Mammary epithelial cell (primary cell): ENCODE measurements at regions of chr16 and their contacts with region 1.

Region 1: DNA sequence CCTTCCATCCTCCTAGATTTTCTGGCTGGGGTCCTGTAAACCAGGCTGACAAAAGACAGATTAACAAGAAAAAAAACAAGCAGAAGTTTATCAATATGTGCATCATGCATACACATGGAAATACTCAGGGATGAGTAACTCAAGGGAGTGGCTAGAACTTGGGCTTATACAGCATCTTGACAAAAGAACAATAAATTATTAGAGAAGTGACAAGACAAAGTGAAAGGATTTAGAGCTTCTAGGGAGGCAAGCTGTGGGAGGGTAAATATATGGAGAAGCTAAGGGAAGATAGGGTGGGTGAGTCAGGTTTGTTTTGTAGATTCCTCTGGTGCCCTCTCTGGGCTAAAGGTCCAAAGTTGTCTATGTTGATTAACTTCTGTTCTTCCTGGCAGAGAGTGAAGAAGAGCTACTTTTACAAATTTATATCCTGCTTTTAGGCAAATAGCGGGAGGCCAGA is 48.0 kb upstream of the NDRG4 start:
- DNase-seq: peak; percentile 62
- H3K4me3 ChIP-seq: no peak overlapping the region
- H3K27ac ChIP-seq: no peak overlapping the region
- H3K4me1 ChIP-seq: no peaks in the 10 kb centered on the region
- H3K27me3 ChIP-seq: no peaks in the 10 kb centered on the region
- CTCF ChIP-seq: peak in 1 of 2 donors; percentile 27

Region 2: GRCh38 chr16:58384113-58385055 is 67.6 kb before region 1 on chr16:
- CTCF ChIA-PET with region 1: no interaction called
- dilution Hi-C with region 1: loop called (anchors 5 kb)
- in situ Hi-C with region 1: no loop called
- intact Hi-C with region 1: no loop called
- DNase-seq: peak; percentile 98
- H3K4me3 ChIP-seq: no peak overlapping the region
- H3K27ac ChIP-seq: peak overlapping the region; percentile 85
- H3K4me1 ChIP-seq: peaks cover 18% of the 10 kb centered on the region
- H3K27me3 ChIP-seq: no peaks in the 10 kb centered on the region
- CTCF ChIP-seq: no peak

Region 3: DNA sequence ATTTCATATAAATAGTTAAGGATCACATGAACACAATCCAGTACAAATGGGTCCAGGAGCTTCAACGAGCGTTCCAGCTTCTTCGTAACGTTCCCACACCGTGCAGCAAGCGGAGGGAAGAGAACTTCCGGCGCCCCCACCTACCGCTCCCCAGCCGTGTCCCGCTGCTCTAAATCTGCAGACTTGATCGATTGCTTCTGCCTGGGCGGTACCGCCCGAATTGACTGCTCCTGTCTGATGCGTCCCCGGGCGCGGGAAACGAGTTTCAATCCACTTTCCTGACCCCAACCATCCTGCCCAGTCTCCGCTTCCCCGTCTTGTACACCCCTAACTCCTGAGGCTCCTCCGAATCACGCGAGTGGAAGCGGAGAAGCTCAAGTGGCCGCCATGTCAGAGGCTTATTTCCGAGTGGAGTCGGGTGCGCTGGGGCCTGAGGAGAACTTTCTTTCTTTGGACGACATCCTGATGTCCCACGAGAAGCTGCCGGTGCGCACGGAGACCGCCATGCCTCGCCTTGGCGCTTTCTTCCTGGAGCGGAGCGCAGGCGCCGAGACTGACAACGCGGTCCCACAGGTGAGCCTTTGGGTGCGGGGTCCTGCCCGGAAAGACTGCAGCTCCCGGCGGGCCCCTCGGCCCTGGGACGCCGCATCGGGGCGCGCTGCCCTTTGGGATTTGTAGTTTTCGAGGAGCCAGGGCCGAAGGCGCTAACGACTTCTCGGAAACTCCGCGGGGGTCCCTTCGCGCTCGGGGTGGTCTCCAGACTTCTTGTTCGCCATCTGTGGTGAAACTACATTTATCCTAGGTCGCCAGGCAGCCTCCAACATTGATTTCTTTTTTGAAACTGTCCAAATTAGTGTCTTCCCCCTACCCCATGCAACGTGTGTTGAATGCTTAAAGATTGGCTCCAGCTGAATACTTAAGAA is 59.5 kb before region 1 on chr16 and contains the start of gene GINS3:
- CTCF ChIA-PET with region 1: interaction called, 11 read pairs
- dilution Hi-C with region 1: loop called (anchors 5 kb)
- in situ Hi-C with region 1: no loop called
- intact Hi-C with region 1: loop called (anchors 5 kb)
- DNase-seq: peak; percentile 87
- H3K4me3 ChIP-seq: peak within 1 kb of the TSS; percentile 82 to 87 (median 87)
- H3K27ac ChIP-seq: peak within 1 kb of the TSS; percentile 94
- H3K4me1 ChIP-seq: peaks cover 3% of the 10 kb centered on the region
- H3K27me3 ChIP-seq: no peaks in the 10 kb centered on the region
- CTCF ChIP-seq: peak in 1 of 2 donors; percentile 14
- total RNA-seq, gene GINS3: 3.3 to 15.1 TPM

Region 4: GRCh38 chr16:58418601-58419000 is 33.4 kb before region 1 on chr16:
- CTCF ChIA-PET with region 1: no interaction called
- dilution Hi-C with region 1: no loop called
- in situ Hi-C with region 1: no loop called
- intact Hi-C with region 1: no loop called
- DNase-seq: peak; percentile 35
- H3K4me3 ChIP-seq: no peak overlapping the region
- H3K27ac ChIP-seq: no peak overlapping the region
- H3K4me1 ChIP-seq: peaks cover 12% of the 10 kb centered on the region
- H3K27me3 ChIP-seq: no peaks in the 10 kb centered on the region
- CTCF ChIP-seq: no peak